Activated CD4-positive, alpha-beta T cell treated with anti-CD3 and anti-CD28 coated beads, Interleukin-2, amount 10 ng/mL, durations not matched to agents 24 days and 14 days (primary cell): ENCODE measurements at regions of chr17 and their contacts with region 1.

Region 1: GRCh38 chr17:46193626-46194392 is 580 bp upstream of the KANSL1 start:
- DNase-seq: peak; percentile 99
- H3K4me3 Mint-ChIP-seq: peak overlapping the region; percentile 78
- H3K27ac Mint-ChIP-seq: peak overlapping the region; percentile 95
- H3K4me1 Mint-ChIP-seq: peaks cover 55% of the 10 kb centered on the region
- H3K27me3 Mint-ChIP-seq: no peaks in the 10 kb centered on the region

Region 2: GRCh38 chr17:46044286-46044928 is 149.4 kb before region 1 on chr17:
- intact Hi-C with region 1: loop called (anchors 2 kb)
- DNase-seq: peak; percentile 82
- H3K4me3 Mint-ChIP-seq: no peak overlapping the region
- H3K27ac Mint-ChIP-seq: no peak overlapping the region
- H3K4me1 Mint-ChIP-seq: peaks cover 16% of the 10 kb centered on the region
- H3K27me3 Mint-ChIP-seq: no peaks in the 10 kb centered on the region

Region 3: GRCh38 chr17:46097497-46097896 is 96.3 kb before region 1 on chr17:
- intact Hi-C with region 1: loop called (anchors 5 kb)
- DNase-seq: no peak
- H3K4me3 Mint-ChIP-seq: no peak overlapping the region
- H3K27ac Mint-ChIP-seq: no peak overlapping the region
- H3K4me1 Mint-ChIP-seq: peaks cover 42% of the 10 kb centered on the region
- H3K27me3 Mint-ChIP-seq: no peaks in the 10 kb centered on the region

Region 4: GRCh38 chr17:46151762-46152161 is 42.0 kb before region 1 on chr17:
- intact Hi-C with region 1: no loop called
- DNase-seq: no peak
- H3K4me3 Mint-ChIP-seq: no peak overlapping the region
- H3K27ac Mint-ChIP-seq: no peak overlapping the region
- H3K4me1 Mint-ChIP-seq: peaks cover 66% of the 10 kb centered on the region
- H3K27me3 Mint-ChIP-seq: no peaks in the 10 kb centered on the region

Region 5: DNA sequence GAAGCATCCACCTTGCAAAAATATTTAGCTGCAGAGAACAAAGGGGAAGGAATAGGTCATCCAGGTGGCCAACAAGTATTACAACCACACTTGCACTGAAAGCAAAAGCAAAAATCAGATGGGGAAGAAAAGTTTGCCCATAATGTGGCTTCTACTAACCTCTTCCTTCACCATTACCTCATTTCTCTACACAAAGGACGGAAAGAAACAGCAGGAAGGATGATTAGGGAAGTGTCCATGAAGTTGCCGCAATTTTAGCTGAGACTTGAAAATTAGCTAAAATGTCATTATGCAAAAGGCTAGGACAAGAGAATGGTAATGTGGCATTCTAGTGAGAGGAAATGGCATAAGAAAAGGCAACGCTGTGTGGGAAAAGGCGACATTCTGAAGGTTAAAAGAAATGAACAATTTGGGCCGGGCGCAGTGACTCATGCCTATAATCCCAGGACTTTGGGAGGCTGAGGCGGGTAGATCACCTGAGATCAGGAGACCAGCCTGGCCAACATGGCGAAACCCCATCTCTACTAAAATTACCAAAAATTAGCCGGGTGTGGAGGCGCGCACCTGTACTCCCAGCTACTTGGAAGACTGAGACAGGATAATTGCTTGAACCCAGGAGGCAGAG is 14.3 kb before region 1 on chr17:
- intact Hi-C with region 1: loop called (anchors 2 kb)
- DNase-seq: no peak
- H3K4me3 Mint-ChIP-seq: peak overlapping the region; percentile 66
- H3K27ac Mint-ChIP-seq: peak overlapping the region; percentile 81
- H3K4me1 Mint-ChIP-seq: peaks cover 67% of the 10 kb centered on the region
- H3K27me3 Mint-ChIP-seq: no peaks in the 10 kb centered on the region

Region 6: DNA sequence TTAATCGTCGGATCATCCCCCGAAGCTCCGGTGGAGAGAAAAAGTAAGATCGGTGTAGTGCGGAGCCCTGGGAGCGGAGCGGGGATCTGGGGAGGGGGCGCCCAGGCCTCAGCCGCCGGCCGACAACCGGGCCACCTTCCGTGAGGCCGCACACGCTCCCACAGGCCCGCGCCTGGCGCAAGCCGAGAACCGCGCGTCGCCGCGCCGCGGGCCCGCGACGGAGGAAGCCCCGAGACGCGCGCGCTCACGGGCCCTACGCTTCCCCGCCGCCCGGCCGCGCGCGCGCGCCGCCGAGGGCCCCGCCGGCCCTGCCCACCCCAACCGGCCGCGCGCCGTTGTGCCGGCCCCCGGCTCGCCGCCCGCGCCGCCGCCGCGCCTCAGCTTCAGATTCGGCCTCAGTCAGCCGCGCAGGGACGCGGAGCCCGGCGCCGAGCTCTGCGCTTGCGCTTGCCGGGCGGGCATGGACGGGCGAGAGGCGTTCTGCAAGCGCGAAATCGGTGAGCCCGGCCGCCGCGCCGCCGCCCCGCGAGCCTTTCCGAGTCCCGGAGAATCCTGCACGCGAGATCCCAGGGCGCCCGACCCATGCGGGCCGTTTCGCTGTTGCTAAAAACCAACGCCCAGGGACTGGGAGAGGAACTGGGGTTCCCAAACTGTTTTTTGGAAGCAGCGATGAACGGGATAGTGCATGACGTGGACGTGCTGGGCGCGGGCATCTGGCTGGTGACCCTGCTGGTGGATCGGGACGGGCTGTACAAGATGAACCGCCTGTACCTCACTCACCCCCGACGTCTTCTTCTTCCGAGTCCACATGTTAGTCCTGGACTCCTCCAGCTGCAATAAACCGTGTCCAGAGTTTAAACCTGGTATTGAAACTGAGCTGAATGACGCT is 73.1 kb after region 1 on chr17:
- intact Hi-C with region 1: loop called (anchors 1 kb)
- DNase-seq: peak; percentile 97
- H3K4me3 Mint-ChIP-seq: peak overlapping the region; percentile 95
- H3K27ac Mint-ChIP-seq: peak overlapping the region; percentile 79
- H3K4me1 Mint-ChIP-seq: peaks cover 32% of the 10 kb centered on the region
- H3K27me3 Mint-ChIP-seq: peaks cover 45% of the 10 kb centered on the region